ENCODE measurements at regions of chr1 and their contacts with region 1.

Region 1: GRCh38 chr1:241640029-241640818 is at the starts of genes CHML and OPN3:
- DNase-seq: peak; percentile 95
- H3K4me3 ChIP-seq: peak within 1 kb of the TSS; percentile 76 to 93 (median 89)
- H3K27ac ChIP-seq: peak within 1 kb of the TSS; percentile 81 to 90 (median 84)
- H3K4me1 ChIP-seq: peaks cover 0 to 37% (median 20%) of the 10 kb centered on the region in 4 donors
- H3K27me3 ChIP-seq: no peaks in the 10 kb centered on the region
- CTCF ChIP-seq: no peak
- EP300 ChIP-seq: no peak
- POLR2A ChIP-seq: no peak
- total RNA-seq, gene CHML: 6.1 to 8.0 (median 6.6) TPM
- total RNA-seq, gene OPN3: 2.5 to 12.8 (median 5.2) TPM

Region 2: DNA sequence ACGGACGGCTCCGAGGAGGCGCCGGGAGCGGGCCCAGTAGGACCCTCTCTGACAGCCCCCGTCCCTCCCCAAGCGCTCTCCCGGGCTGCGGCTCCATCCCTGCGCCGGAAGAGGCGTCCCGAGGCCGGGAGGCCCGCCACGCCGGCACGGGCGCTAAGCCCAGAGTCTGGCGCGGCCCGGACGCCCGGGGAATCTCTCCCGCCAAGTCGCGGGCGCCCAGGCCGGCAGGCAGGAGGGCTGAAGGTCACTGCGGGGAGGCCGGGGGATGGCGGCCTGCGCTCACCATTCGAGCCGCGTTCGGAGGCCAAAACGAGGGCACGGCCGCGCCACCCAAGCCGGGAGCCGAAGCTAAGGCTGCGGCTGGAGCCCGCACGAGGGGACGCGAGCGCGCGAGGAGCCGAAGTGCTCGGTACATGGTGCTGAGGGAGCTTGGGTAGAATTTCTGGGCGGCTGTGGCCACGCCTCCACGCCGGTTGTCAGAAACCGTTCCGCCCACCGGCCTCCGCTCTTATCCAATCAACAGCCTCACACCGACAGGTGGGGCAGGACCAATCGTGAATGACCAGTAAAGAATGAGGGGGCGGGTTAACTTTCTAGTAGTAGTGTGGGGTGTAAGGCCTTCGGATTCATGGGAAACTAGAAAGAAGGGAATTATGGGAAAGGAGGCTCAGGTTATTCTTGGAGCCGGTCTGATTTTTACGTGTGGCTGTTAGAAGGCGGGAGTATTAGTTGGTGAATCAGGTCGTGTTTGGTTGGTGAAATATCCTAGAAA is 120.7 kb before region 1 on chr1 and contains the start of gene FH:
- intact Hi-C with region 1: loop called (anchors 10 kb)
- DNase-seq: peak; percentile 98
- H3K4me3 ChIP-seq: peak within 1 kb of the TSS; percentile 80 to 91 (median 84)
- H3K27ac ChIP-seq: peak within 1 kb of the TSS; percentile 91 to 96 (median 95)
- H3K4me1 ChIP-seq: peaks cover 0 to 21% (median 13%) of the 10 kb centered on the region in 4 donors
- H3K27me3 ChIP-seq: no peaks in the 10 kb centered on the region
- CTCF ChIP-seq: no peak
- EP300 ChIP-seq: no peak
- POLR2A ChIP-seq: peak; percentile 67 to 81
- total RNA-seq, gene FH: 39.9 to 69.2 (median 53.2) TPM

Region 3: DNA sequence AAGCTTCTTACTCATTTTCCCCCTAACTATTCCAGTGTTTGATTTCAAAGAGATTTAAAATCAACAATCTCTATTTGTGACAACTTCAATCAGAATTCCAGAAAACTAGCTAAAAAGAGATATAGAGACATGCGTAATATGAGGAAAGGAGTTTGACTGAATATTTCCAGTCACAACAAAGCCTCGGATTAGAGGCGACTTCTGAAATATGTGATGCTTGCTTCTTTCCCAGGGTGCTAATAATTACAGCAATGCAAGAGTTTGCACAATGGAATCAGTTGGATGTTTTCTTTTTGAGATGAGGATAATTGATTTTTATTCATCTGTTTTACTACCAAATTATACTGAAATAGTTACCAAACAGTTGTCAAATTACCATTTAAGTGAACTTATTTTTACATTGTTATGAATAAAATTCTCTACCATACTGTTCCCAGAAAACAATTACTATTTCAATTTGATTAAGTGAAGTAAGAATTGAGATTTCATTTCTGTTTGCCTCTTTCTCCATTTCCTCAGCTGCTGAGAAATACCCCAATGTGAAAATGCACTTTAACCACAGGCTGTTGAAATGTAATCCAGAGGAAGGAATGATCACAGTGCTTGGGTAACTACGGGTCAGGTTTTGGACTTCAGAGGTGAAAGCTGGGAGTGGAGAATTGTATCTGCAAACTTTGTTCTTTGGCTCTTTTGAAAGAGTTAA is 79.9 kb before region 1 on chr1:
- intact Hi-C with region 1: no loop called
- DNase-seq: no peak
- H3K4me3 ChIP-seq: no peak overlapping the region
- H3K27ac ChIP-seq: no peak overlapping the region
- H3K4me1 ChIP-seq: no peaks in the 10 kb centered on the region
- H3K27me3 ChIP-seq: no peaks in the 10 kb centered on the region
- CTCF ChIP-seq: no peak
- EP300 ChIP-seq: no peak
- POLR2A ChIP-seq: no peak

Region 4: DNA sequence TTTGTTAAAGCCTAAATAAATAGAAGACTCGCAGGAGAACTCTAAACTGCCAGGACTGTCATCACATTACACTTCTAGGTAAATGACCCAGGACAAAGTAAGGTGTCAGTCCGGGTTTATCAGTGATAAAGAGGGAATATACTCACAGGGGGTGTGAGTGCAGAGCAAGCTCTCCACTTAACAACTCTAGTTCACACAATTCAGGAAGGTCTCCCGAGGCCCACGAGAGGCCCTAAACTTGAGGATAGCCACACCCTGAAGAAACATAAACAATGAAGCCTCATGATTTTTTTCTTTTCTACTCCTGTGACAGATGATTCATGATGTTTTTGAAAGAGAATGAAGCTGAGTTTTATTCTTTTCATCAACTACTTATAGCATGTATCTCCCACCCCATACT is 142.2 kb after region 1 on chr1:
- intact Hi-C with region 1: loop called (anchors 2 kb)
- DNase-seq: no peak
- H3K4me3 ChIP-seq: no peak overlapping the region
- H3K27ac ChIP-seq: no peak overlapping the region
- H3K4me1 ChIP-seq: peaks cover 0 to 14% (median 10%) of the 10 kb centered on the region in 4 donors
- H3K27me3 ChIP-seq: no peaks in the 10 kb centered on the region
- CTCF ChIP-seq: no peak
- EP300 ChIP-seq: no peak
- POLR2A ChIP-seq: no peak

Region 5: DNA sequence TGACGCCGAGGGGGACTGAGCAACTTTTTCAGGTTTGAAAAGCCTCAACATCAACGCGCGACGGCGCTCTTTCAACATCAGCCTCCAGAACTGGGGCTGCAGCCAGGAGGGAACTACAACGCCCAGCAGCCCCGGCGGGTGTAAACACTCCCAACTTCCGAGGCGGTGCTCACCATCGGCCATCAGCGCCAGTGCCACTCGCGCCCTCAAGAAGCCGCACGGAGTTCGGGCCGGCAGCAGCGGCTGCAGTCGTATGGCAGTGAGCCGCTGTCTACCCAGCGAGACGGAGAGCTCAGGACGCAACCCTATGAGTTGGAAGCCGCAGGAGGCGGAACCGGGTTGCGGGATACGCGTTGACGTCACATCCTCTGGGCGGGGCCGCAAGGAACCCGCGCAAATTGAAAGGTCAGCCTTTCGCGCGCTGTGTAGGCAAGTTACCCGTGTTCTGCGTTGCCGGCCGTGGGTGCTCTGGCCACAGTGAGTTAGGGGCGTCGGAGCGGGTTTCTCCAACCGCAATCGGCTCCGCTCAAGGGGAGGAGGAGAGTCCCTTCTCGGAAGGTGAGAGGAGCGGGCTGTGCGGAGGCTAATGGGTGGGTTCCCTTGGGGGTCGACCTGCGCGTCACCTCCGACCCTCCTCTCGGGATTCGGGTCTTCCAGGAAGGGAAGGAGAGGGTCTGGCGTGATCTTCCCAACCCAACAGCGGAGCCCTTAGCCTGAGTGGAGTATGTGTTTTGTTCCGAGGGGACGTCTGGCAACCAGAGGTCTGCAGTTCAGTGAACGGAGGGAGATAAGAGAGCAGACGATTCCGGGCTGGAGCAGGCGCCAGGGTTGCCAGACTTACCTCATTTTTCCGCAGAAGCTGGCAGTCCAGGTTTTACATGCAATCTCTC is 207.8 kb after region 1 on chr1 and contains the start of gene EXO1:
- intact Hi-C with region 1: loop called (anchors 5 kb)
- DNase-seq: peak; percentile 92
- H3K4me3 ChIP-seq: peak within 1 kb of the TSS; percentile 72 to 89 (median 78)
- H3K27ac ChIP-seq: peak within 1 kb of the TSS; percentile 95 to 99 (median 96)
- H3K4me1 ChIP-seq: peaks cover 0 to 12% (median 11%) of the 10 kb centered on the region in 4 donors
- H3K27me3 ChIP-seq: no peaks in the 10 kb centered on the region
- CTCF ChIP-seq: no peak
- EP300 ChIP-seq: no peak
- POLR2A ChIP-seq: no peak
- total RNA-seq, gene EXO1: 0.27 to 0.71 TPM in 2 of 4 donors, not detected in the others